ENCODE measurements at regions of chr22 and their contacts with region 1.

Region 1: GRCh38 chr22:46006379-46007002 is 29.5 kb upstream of the WNT7B start:
- DNase-seq: peak; percentile 90
- ATAC-seq: peak; percentile 91
- H3K4me3 Mint-ChIP-seq: no peak overlapping the region
- H3K27ac Mint-ChIP-seq: peak overlapping the region; percentile 6
- H3K4me1 Mint-ChIP-seq: peaks cover 20% of the 10 kb centered on the region
- H3K27me3 Mint-ChIP-seq: no peaks in the 10 kb centered on the region

Region 2: GRCh38 chr22:45885837-45886395 is 120.6 kb before region 1 on chr22:
- CTCF ChIA-PET with region 1: no interaction called
- POLR2A ChIA-PET with region 1: no interaction called
- DNase-seq: no peak
- ATAC-seq: no peak
- H3K4me3 Mint-ChIP-seq: no peak overlapping the region
- H3K27ac Mint-ChIP-seq: no peak overlapping the region
- H3K4me1 Mint-ChIP-seq: no peaks in the 10 kb centered on the region
- H3K27me3 Mint-ChIP-seq: peaks cover 5% of the 10 kb centered on the region

Region 3: GRCh38 chr22:45896261-45896951 is 110.1 kb before region 1 on chr22:
- CTCF ChIA-PET with region 1: no interaction called
- POLR2A ChIA-PET with region 1: no interaction called
- DNase-seq: no peak
- ATAC-seq: no peak
- H3K4me3 Mint-ChIP-seq: no peak overlapping the region
- H3K27ac Mint-ChIP-seq: no peak overlapping the region
- H3K4me1 Mint-ChIP-seq: no peaks in the 10 kb centered on the region
- H3K27me3 Mint-ChIP-seq: peaks cover 3% of the 10 kb centered on the region

Region 4: GRCh38 chr22:45960477-45961386 is 45.8 kb before region 1 on chr22:
- CTCF ChIA-PET with region 1: no interaction called
- POLR2A ChIA-PET with region 1: no interaction called
- DNase-seq: no peak
- ATAC-seq: no peak
- H3K4me3 Mint-ChIP-seq: no peak overlapping the region
- H3K27ac Mint-ChIP-seq: no peak overlapping the region
- H3K4me1 Mint-ChIP-seq: no peaks in the 10 kb centered on the region
- H3K27me3 Mint-ChIP-seq: no peaks in the 10 kb centered on the region

Region 5: GRCh38 chr22:45977003-45977411 is 29.5 kb before region 1 on chr22 and contains the start of gene WNT7B:
- CTCF ChIA-PET with region 1: no interaction called
- POLR2A ChIA-PET with region 1: no interaction called
- DNase-seq: no peak
- ATAC-seq: no peak
- H3K4me3 Mint-ChIP-seq: no peak within 1 kb of the TSS
- H3K27ac Mint-ChIP-seq: no peak within 1 kb of the TSS
- H3K4me1 Mint-ChIP-seq: peaks cover 4% of the 10 kb centered on the region
- H3K27me3 Mint-ChIP-seq: peaks cover 44% of the 10 kb centered on the region
- total RNA-seq, gene WNT7B: not detected

Region 6: DNA sequence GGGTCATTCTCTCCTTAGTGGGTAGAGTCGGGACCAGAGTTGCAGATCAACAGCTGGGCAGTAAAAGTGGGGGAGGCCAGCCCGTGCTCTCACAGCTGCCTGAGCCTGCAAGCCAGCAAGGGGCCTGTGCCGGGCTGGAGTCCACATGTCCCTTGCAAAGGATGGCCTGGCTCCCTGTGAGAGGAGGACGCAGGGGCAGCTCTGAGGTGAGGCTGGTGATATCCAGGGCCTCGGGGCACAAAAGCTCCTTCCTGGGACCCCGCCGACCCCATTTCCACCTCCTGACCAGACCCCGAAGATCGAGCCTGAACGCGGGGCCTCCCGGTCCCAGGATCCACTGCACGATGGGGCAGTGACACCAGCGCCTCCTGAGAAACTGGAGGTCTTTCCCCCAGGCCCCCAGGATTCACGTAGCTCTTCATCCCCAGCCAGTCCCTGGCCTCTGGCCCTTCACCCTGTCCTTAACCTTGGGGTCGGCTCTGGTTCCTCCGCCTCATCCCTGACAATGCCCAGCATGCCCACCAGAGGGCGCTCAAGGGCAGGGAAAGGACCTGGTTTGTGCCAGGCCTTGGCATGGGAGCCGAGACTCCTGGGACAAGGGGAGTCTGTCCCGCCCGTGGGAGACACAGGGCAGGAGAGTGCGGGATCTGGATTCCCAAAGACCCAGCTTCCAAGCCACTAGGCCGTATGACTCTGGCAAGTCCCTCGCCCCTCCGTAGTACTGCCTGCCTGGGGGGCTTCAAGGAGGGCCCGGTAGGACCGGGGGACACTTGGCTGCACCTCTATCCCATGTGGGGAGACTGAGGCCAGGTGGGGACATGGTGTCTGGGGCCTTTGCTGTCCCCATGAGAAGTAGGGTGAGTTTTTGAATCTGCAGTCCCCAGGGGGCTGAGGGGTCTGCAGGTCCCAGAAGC is 11.7 kb before region 1 on chr22:
- CTCF ChIA-PET with region 1: interaction called, 67 read pairs
- POLR2A ChIA-PET with region 1: interaction called, 3 read pairs
- DNase-seq: peak; percentile 83
- ATAC-seq: peak; percentile 66
- H3K4me3 Mint-ChIP-seq: no peak overlapping the region
- H3K27ac Mint-ChIP-seq: no peak overlapping the region
- H3K4me1 Mint-ChIP-seq: peaks cover 21% of the 10 kb centered on the region
- H3K27me3 Mint-ChIP-seq: peaks cover 6% of the 10 kb centered on the region

Region 7: GRCh38 chr22:46035742-46036557 is 29.5 kb after region 1 on chr22:
- CTCF ChIA-PET with region 1: interaction called, 129 read pairs
- POLR2A ChIA-PET with region 1: interaction called, 16 read pairs
- DNase-seq: peak; percentile 100
- ATAC-seq: peak; percentile 95
- H3K4me3 Mint-ChIP-seq: peak overlapping the region; percentile 81
- H3K27ac Mint-ChIP-seq: peak overlapping the region; percentile 95
- H3K4me1 Mint-ChIP-seq: peaks cover 21% of the 10 kb centered on the region
- H3K27me3 Mint-ChIP-seq: no peaks in the 10 kb centered on the region

Region 8: DNA sequence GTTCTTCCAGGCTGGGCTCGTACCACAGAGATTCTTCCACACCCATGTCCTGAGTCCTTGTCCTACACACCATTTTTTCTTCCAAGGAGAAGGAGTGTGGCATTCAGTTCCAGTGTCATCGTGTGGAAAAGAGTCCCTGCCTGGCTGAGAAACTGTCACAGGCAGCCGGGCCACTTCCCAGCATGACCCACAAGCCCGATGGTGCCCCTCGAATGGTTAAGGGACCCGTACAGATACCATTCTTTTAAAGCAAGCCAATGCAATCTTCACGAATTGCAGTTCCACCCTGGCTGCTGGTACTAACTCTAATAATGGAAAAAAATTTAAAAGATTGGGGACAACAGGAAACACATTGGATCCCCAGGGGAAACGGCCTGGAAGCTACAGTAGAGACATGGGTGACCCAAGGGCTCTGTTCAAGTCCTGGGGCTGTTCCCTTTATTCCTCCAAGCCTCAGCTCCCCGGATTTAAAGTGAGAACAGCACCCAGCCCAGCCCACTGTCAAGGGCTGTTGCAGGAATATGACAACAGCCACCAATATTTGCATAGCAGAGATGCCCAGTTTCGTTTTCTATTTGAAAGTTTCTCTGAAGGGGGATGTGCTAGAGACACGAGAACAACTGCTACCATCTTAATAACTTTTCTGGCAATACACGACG is 51.4 kb after region 1 on chr22:
- CTCF ChIA-PET with region 1: interaction called, 12 read pairs
- POLR2A ChIA-PET with region 1: interaction called, 3 read pairs
- DNase-seq: peak; percentile 55
- ATAC-seq: peak; percentile 77
- H3K4me3 Mint-ChIP-seq: peak overlapping the region; percentile 54
- H3K27ac Mint-ChIP-seq: peak overlapping the region; percentile 82
- H3K4me1 Mint-ChIP-seq: peaks cover 45% of the 10 kb centered on the region
- H3K27me3 Mint-ChIP-seq: no peaks in the 10 kb centered on the region

Region 9: GRCh38 chr22:46076651-46077339 is 70.3 kb after region 1 on chr22:
- CTCF ChIA-PET with region 1: interaction called, 16 read pairs
- POLR2A ChIA-PET with region 1: no interaction called
- DNase-seq: no peak
- ATAC-seq: no peak
- H3K4me3 Mint-ChIP-seq: no peak overlapping the region
- H3K27ac Mint-ChIP-seq: no peak overlapping the region
- H3K4me1 Mint-ChIP-seq: peaks cover 29% of the 10 kb centered on the region
- H3K27me3 Mint-ChIP-seq: peaks cover 3% of the 10 kb centered on the region

Region 10: GRCh38 chr22:46122511-46122971 is 116.0 kb after region 1 on chr22:
- CTCF ChIA-PET with region 1: interaction called, 107 read pairs
- POLR2A ChIA-PET with region 1: interaction called, 4 read pairs
- DNase-seq: peak; percentile 77
- ATAC-seq: peak; percentile 82
- H3K4me3 Mint-ChIP-seq: no peak overlapping the region
- H3K27ac Mint-ChIP-seq: no peak overlapping the region
- H3K4me1 Mint-ChIP-seq: peaks cover 5% of the 10 kb centered on the region
- H3K27me3 Mint-ChIP-seq: no peaks in the 10 kb centered on the region

Measured in activated CD8-positive, alpha-beta T cell treated with anti-CD3 and anti-CD28 coated beads, Interleukin-2, amount 10 ng/mL, durations not matched to agents 7 days and 5 days (primary cell).